IMR-90 (cell line): ENCODE measurements at regions of chr5 and their contacts with region 1.

Region 1: GRCh38 chr5:103475629-103476240 is 86.9 kb downstream of the NUDT12 start:
- DNase-seq: peak; percentile 60
- ATAC-seq: peak; percentile 85
- H3K4me3 ChIP-seq: no peak overlapping the region
- H3K27ac ChIP-seq: no peak overlapping the region
- H3K4me1 ChIP-seq: no peaks in the 10 kb centered on the region
- H3K27me3 ChIP-seq: peaks cover under 1% of the 10 kb centered on the region
- CTCF ChIP-seq: peak; percentile 85
- POLR2A ChIP-seq: no peak
- RAD21 ChIP-seq: peak; percentile 94

Region 2: GRCh38 chr5:102536323-102536928 is 939.3 kb before region 1 on chr5:
- CTCF ChIA-PET with region 1: no interaction called
- POLR2A ChIA-PET with region 1: no interaction called
- dilution Hi-C with region 1: no loop called
- in situ Hi-C with region 1: no loop called
- intact Hi-C with region 1: loop called (anchors 10 kb)
- DNase-seq: peak; percentile 22
- ATAC-seq: no peak
- H3K4me3 ChIP-seq: no peak overlapping the region
- H3K27ac ChIP-seq: no peak overlapping the region
- H3K4me1 ChIP-seq: no peaks in the 10 kb centered on the region
- H3K27me3 ChIP-seq: 0 out of 2 replicates have a peak, but pooled peaks cover 1% of the 10 kb centered on the region
- CTCF ChIP-seq: peak; percentile 45
- POLR2A ChIP-seq: no peak
- RAD21 ChIP-seq: peak; percentile 51

Region 3: GRCh38 chr5:103151156-103151555 is 324.6 kb before region 1 on chr5:
- CTCF ChIA-PET with region 1: no interaction called
- POLR2A ChIA-PET with region 1: no interaction called
- dilution Hi-C with region 1: no loop called
- in situ Hi-C with region 1: no loop called
- intact Hi-C with region 1: loop called (anchors 5 kb)
- DNase-seq: no peak
- ATAC-seq: no peak
- H3K4me3 ChIP-seq: no peak overlapping the region
- H3K27ac ChIP-seq: no peak overlapping the region
- H3K4me1 ChIP-seq: no peaks in the 10 kb centered on the region
- H3K27me3 ChIP-seq: no peaks in the 10 kb centered on the region
- CTCF ChIP-seq: no peak
- POLR2A ChIP-seq: no peak
- RAD21 ChIP-seq: no peak

Region 4: DNA sequence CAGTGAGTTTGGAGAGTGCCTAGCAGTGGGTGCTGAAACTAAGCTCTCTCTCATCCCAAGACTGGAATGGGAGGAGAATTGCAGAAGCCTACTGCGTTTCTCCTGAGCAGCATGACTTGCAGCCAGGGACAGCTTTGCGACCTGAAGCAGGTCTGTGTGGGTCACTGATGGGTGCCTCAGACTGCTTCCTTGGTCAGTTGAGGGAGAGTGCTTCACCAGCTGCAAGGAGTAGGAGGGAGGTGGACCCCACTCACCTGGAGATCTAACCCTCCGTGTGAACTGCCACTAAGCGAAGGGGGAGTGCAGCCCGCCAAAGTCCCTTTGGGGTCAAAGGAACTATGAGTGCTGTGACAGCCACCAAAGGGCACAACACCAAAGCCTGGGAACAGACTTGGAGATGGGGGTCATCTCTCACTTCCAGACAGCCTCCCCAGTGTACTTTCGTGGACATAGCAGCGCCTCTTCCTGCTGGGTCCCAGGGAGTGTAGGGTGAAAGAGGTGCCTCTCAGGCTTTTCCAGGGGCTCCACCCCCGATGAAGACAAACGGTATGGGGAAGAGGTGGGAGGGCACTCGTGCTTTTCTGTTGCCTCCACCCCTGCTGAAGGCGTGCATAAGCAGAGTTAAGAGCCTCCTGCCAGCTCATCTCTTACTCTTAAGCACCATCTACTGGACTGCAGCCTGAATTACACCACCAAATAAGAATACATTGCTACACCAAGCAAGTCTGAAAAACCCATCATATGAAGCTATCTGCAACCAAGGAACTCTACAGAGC is 251.4 kb before region 1 on chr5:
- CTCF ChIA-PET with region 1: interaction called, 10 read pairs
- POLR2A ChIA-PET with region 1: no interaction called
- dilution Hi-C with region 1: no loop called
- in situ Hi-C with region 1: no loop called
- intact Hi-C with region 1: no loop called
- DNase-seq: peak; percentile 75
- ATAC-seq: peak; percentile 100
- H3K4me3 ChIP-seq: no peak overlapping the region
- H3K27ac ChIP-seq: no peak overlapping the region
- H3K4me1 ChIP-seq: no peaks in the 10 kb centered on the region
- H3K27me3 ChIP-seq: no peaks in the 10 kb centered on the region
- CTCF ChIP-seq: peak; percentile 78
- POLR2A ChIP-seq: no peak
- RAD21 ChIP-seq: peak; percentile 75

Region 5: GRCh38 chr5:103232393-103232999 is 243.2 kb before region 1 on chr5:
- CTCF ChIA-PET with region 1: interaction called, 17 read pairs
- POLR2A ChIA-PET with region 1: no interaction called
- dilution Hi-C with region 1: no loop called
- in situ Hi-C with region 1: loop called (anchors 5 kb)
- intact Hi-C with region 1: loop called (anchors 1 kb)
- DNase-seq: peak; percentile 55
- ATAC-seq: peak; percentile 87
- H3K4me3 ChIP-seq: no peak overlapping the region
- H3K27ac ChIP-seq: no peak overlapping the region
- H3K4me1 ChIP-seq: no peaks in the 10 kb centered on the region
- H3K27me3 ChIP-seq: no peaks in the 10 kb centered on the region
- CTCF ChIP-seq: peak; percentile 91
- POLR2A ChIP-seq: no peak
- RAD21 ChIP-seq: peak; percentile 78

Region 6: DNA sequence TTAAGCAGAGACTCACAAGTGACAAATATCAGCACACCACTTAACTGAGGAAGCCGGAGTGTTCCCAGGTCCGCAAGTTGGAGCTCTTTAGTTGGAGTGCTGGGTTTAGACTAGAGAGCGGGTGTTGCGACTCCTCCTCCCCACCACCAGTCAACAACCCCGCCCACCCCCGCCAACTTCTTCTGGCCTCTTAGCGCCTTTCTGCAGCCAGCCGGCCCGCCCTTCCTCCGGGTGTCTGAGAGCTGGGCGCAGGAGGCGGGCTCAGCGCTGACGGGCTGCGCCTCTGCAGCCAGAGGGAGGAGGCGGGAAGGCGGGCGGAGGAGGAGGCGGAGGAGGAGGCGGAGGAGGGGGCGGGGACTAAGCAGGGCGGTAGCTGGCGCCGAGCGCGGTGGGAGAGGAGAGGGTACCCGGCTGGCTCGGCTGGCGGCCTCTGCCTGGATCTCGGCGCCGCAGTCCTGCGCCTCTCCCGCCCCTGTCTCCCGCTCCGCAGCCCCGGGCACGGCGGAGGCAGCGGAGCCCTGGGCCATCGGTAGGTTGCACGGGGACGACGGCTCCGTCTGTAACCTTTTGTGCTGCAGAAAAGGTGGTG is 217.3 kb before region 1 on chr5 and contains the start of gene MACIR:
- CTCF ChIA-PET with region 1: interaction called, 6 read pairs
- POLR2A ChIA-PET with region 1: interaction called, 7 read pairs
- dilution Hi-C with region 1: no loop called
- in situ Hi-C with region 1: no loop called
- intact Hi-C with region 1: loop called (anchors 1 kb)
- DNase-seq: peak; percentile 95
- ATAC-seq: peak; percentile 97
- H3K4me3 ChIP-seq: peak within 1 kb of the TSS; percentile 98
- H3K27ac ChIP-seq: peak within 1 kb of the TSS; percentile 78
- H3K4me1 ChIP-seq: peaks cover 2% of the 10 kb centered on the region
- H3K27me3 ChIP-seq: no peaks in the 10 kb centered on the region; the same call in 1 of the 2 replicates
- CTCF ChIP-seq: no peak
- POLR2A ChIP-seq: peak; percentile 36; the same call in 1 of the 2 replicates
- RAD21 ChIP-seq: no peak
- total RNA-seq, gene MACIR: 21.3 and 22.2 TPM in 2 replicates